PC-9 (cell line): ENCODE measurements at regions of chr17 and their contacts with region 1.

Region 1: GRCh38 chr17:83055911-83056582 is 23.4 kb upstream of the METRNL start:
- DNase-seq: peak; percentile 34 to 69
- H3K4me3 ChIP-seq: no peak overlapping the region
- H3K27ac ChIP-seq: no peak overlapping the region
- H3K4me1 ChIP-seq: peaks cover 14% of the 10 kb centered on the region
- H3K27me3 ChIP-seq: no peaks in the 10 kb centered on the region
- CTCF ChIP-seq: no peak

Region 2: DNA sequence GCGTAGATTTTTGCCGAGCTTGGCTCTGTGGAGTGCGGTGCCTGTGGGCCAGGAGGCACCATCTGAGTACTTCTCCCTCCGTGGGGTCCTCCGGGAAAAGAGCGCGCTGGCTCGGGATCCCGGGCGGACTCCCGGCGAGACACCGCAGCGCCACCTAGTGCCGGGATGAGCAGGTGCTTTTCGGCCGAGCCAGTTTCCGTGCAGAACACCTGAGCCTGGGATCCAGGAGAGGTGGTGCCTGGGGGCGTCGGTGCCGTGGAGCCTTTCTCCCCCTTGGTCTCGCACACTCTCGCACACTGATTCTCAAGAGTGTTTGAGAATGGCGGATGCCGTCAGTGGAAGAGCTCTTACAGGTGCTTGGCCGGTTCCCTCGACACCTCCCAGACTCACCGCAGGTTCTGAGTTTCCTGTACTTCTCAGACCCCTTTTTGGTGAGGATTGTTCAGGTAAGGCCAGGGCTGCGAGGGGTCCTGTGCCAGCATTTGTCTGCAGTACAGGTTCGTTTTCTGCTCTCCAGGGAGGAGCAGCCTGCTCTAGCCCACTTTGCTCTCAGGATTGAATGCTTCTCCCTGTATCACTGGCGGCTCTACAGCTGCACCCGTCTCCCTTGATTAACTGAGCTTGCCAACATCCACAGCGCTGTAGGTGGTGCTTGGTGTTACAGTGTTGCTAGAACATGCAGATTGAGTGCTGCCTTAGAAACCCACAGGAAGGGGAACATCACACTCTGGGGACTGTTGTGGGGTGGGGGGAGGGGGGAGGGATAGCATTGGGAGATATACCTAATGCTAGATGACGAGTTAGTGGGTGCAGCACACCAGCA is 280.8 kb before region 1 on chr17:
- CTCF ChIA-PET with region 1: no interaction called
- POLR2A ChIA-PET with region 1: interaction called, 18 read pairs
- intact Hi-C with region 1: no loop called
- DNase-seq: peak in 1 of 2 experiments; percentile 64
- H3K4me3 ChIP-seq: no peak overlapping the region
- H3K27ac ChIP-seq: no peak overlapping the region
- H3K4me1 ChIP-seq: no peaks in the 10 kb centered on the region
- H3K27me3 ChIP-seq: no peaks in the 10 kb centered on the region
- CTCF ChIP-seq: peak; percentile 59

Region 3: DNA sequence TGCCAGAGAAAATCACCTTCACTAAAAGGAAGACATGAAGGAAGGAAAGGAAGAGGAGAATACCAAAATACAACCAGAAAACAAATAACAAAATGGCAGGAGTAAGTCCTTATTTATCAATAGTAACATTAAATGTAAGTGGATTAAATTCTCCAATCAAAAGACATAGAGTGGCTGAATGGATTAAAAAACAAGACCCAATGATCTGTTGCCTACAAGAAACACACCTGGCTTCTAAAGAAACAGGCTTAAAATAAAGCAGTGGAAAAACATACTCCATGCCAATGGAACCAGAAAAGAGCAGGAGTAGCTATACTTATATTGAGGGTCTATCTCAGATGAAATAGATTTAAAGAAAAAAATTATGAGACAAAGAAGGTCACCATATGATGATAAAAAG is 63.0 kb before region 1 on chr17:
- CTCF ChIA-PET with region 1: no interaction called
- POLR2A ChIA-PET with region 1: no interaction called
- intact Hi-C with region 1: no loop called
- DNase-seq: no peak
- H3K4me3 ChIP-seq: no peak overlapping the region
- H3K27ac ChIP-seq: no peak overlapping the region
- H3K4me1 ChIP-seq: no peaks in the 10 kb centered on the region
- H3K27me3 ChIP-seq: no peaks in the 10 kb centered on the region
- CTCF ChIP-seq: no peak